Heart left ventricle (tissue), 16 donors: ENCODE measurements at regions of chrX and their contacts with region 1.

Region 1: DNA sequence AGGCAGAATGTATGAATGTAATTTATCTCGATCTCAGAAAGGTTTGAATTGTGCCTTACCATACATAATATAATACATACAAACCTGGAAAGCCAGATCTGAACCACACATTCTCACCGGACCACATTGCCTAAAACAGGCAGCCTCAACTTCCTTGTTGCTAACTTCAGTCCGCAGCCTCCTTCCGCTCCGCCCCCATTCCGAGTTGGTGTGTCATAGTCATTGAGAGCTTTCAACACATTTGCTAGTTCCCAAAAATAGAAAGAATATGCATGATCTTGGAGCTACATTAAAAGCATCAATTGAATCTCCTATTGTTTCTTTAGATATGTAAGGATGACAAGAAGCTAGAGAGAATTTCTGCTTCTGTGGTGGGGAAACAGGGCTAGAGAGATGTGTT is 127.2 kb downstream of the ARHGEF9 start:
- DNase-seq: peak; percentile 47 to 77 (median 60)
- ATAC-seq: peak; percentile 69 to 88 (median 78)
- H3K4me3 ChIP-seq: no peak overlapping the region
- H3K27ac ChIP-seq: peak overlapping the region in 9 of 12 donors; percentile 14 to 81 (median 62)
- H3K4me1 ChIP-seq: peaks cover 0 to 20% (median 6%) of the 10 kb centered on the region in 12 donors
- H3K27me3 ChIP-seq: peaks cover 0 to 8% (median 0%) of the 10 kb centered on the region in 9 donors
- CTCF ChIP-seq: no peak
- POLR2A ChIP-seq: no peak

Region 2: GRCh38 chrX:63466690-63467089 is 191.1 kb before region 1 on chrX:
- intact Hi-C with region 1: loop called in 1 of 10 experiments (anchors 5 kb)
- DNase-seq: no peak
- ATAC-seq: no peak
- H3K4me3 ChIP-seq: no peak overlapping the region
- H3K27ac ChIP-seq: no peak overlapping the region
- H3K4me1 ChIP-seq: no peaks in the 10 kb centered on the region
- H3K27me3 ChIP-seq: no peaks in the 10 kb centered on the region
- CTCF ChIP-seq: no peak
- POLR2A ChIP-seq: no peak

Region 3: DNA sequence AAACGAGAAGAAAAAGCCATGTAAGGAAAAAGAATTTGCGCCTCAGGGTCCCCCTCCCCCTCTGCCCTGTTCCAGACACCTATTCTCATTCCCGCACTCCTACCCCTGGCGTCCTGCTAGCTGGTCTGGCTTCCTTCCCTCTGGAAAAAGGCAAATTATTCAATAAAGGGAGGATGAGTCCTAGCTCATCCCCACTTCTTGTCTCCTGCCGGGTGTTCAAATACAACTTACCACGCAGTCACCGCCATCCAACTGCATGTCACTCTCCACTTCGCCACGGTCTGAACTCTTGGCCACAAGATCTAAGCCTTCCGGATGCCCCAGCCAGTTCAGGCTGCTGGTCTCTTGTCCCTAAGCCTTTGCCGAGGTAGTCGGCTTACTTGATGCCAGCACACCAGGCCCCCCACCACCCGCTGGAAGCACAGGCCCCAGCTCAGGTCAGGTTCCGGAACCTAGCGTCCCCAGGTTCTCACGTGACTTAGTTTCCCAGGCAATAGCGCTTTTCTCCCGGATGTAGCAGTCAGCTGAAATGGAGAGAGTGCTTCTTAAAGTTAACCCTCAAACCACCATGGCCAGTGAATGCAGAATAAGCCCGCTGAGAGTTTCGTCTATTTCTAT is 97.1 kb before region 1 on chrX:
- intact Hi-C with region 1: loop called in 1 of 10 experiments (anchors 10 kb)
- DNase-seq: peak; percentile 37 to 61 (median 57)
- ATAC-seq: peak; percentile 91 to 99 (median 98)
- H3K4me3 ChIP-seq: peak overlapping the region; percentile 9 to 81 (median 66)
- H3K27ac ChIP-seq: peak overlapping the region in 11 of 12 donors; percentile 9 to 77 (median 65)
- H3K4me1 ChIP-seq: peaks cover 0 to 14% (median 0%) of the 10 kb centered on the region in 12 donors
- H3K27me3 ChIP-seq: no peaks in the 10 kb centered on the region
- CTCF ChIP-seq: no peak
- POLR2A ChIP-seq: no peak

Region 4: DNA sequence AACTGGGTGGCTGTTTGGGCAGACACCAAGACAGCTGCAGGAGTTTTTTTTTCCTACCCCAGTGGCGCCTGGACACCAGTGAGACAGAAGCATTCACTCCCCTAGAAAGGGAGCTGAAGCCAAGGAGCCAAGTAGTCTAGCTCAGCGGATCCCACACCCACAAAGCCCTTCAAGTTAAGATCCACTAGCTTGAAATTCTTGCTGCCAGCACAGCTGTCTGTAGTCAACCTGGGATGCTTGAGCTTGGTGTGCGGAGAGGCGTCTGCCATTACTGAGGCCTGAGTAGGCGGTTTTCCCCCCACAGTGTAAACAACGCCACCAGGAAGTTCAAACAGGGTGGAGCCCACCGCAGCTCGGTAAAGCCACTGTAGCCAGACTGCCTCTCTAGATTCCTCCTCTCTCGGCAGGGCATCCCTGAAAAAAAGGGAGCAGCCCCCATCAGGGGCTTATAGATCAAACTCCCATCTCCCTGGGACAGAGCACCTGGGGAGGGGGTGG is 44.2 kb before region 1 on chrX:
- intact Hi-C with region 1: no loop called
- DNase-seq: no peak
- ATAC-seq: no peak
- H3K4me3 ChIP-seq: no peak overlapping the region
- H3K27ac ChIP-seq: no peak overlapping the region
- H3K4me1 ChIP-seq: no peaks in the 10 kb centered on the region
- H3K27me3 ChIP-seq: no peaks in the 10 kb centered on the region
- CTCF ChIP-seq: no peak
- POLR2A ChIP-seq: no peak

Region 5: DNA sequence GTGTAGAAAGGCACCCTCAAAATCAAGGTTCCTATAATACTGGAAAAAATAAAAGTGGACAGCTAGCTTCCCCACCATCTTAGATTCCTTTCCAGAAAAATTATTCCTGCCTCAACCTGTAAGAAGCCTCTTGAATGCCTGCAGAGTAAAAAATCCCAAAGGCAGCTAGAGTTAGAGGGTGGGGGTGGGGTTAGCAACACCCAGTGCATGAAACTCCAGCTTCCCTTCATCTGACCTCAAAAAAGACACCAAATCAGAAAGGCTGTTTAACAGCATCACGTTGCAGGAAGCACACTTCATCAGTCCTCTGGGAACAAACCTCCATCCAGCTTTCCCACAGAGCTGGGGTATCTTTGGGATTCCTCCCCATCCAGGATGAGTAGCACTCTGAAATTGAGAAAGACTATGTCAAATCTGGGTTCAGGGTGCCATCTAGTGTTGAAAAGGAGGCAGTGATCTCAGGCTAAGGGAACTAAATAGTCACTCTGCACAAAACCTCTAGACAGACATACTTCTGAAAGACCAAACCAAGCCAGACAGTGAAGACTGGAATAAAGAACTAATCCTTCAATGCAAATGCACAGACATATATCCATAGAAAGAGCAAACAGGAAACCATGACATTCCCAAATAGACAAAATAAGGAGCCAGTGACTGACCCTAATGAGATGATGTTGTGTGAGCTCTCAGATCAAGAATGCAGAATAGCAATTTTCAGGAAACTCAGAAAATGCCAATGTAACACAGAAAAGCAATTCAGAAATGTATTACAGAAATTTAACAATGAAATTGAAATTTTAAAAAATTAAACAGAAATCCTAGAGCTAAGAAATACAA is 29.3 kb after region 1 on chrX:
- intact Hi-C with region 1: no loop called
- DNase-seq: peak in 1 of 5 donors; percentile 5
- ATAC-seq: peak in 3 of 4 donors; percentile 44 to 58 (median 53)
- H3K4me3 ChIP-seq: no peak overlapping the region
- H3K27ac ChIP-seq: no peak overlapping the region
- H3K4me1 ChIP-seq: no peaks in the 10 kb centered on the region
- H3K27me3 ChIP-seq: peaks cover 0 to 7% (median 0%) of the 10 kb centered on the region in 9 donors
- CTCF ChIP-seq: peak; percentile 32 to 61 (median 46)
- POLR2A ChIP-seq: no peak